ENCODE measurements at regions of chr13 and their contacts with region 1.

Region 1: GRCh38 chr13:28636674-28637317 is 22.1 kb upstream of the POMP start:
- DNase-seq: peak in 8 of 9 donors; percentile 25 to 66 (median 58)
- ATAC-seq: peak; percentile 78
- H3K4me3 ChIP-seq: no peak overlapping the region
- H3K4me3 Mint-ChIP-seq: peak overlapping the region; percentile 1 to 65 (median 34)
- H3K27ac ChIP-seq: no peak overlapping the region
- H3K27ac Mint-ChIP-seq: peak overlapping the region in 5 of 9 donors; percentile 3 to 49 (median 13)
- H3K4me1 ChIP-seq: peaks cover 0 to 7% of the 10 kb centered on the region in 2 donors
- H3K4me1 Mint-ChIP-seq: peaks cover 0 to 8% (median 7%) of the 10 kb centered on the region in 7 donors
- H3K27me3 ChIP-seq: no peaks in the 10 kb centered on the region
- H3K27me3 Mint-ChIP-seq: peaks cover 5 to 24% (median 17%) of the 10 kb centered on the region in 5 donors

Region 2: GRCh38 chr13:28239374-28239773 is 397.4 kb before region 1 on chr13:
- CTCF ChIA-PET with region 1: no interaction called
- POLR2A ChIA-PET with region 1: no interaction called
- intact Hi-C with region 1: no loop called
- DNase-seq: no peak
- ATAC-seq: no peak
- H3K4me3 ChIP-seq: no peak overlapping the region
- H3K4me3 Mint-ChIP-seq: no peak overlapping the region
- H3K27ac ChIP-seq: no peak overlapping the region
- H3K27ac Mint-ChIP-seq: peak overlapping the region in 4 of 9 donors; percentile 11 to 69 (median 18)
- H3K4me1 ChIP-seq: no peaks in the 10 kb centered on the region
- H3K4me1 Mint-ChIP-seq: peaks cover 0 to 34% (median 16%) of the 10 kb centered on the region in 7 donors
- H3K27me3 ChIP-seq: no peaks in the 10 kb centered on the region
- H3K27me3 Mint-ChIP-seq: no peaks in the 10 kb centered on the region

Region 3: GRCh38 chr13:28324181-28324789 is 312.5 kb before region 1 on chr13:
- CTCF ChIA-PET with region 1: interaction called, 4 read pairs
- POLR2A ChIA-PET with region 1: no interaction called
- intact Hi-C with region 1: loop called (anchors 1 kb)
- DNase-seq: peak; percentile 14 to 60 (median 51)
- ATAC-seq: peak; percentile 86
- H3K4me3 ChIP-seq: no peak overlapping the region
- H3K4me3 Mint-ChIP-seq: no peak overlapping the region
- H3K27ac ChIP-seq: no peak overlapping the region
- H3K27ac Mint-ChIP-seq: no peak overlapping the region
- H3K4me1 ChIP-seq: no peaks in the 10 kb centered on the region
- H3K4me1 Mint-ChIP-seq: peaks cover 0 to 5% (median 0%) of the 10 kb centered on the region in 7 donors
- H3K27me3 ChIP-seq: no peaks in the 10 kb centered on the region
- H3K27me3 Mint-ChIP-seq: peaks cover 0 to 6% (median 0%) of the 10 kb centered on the region in 5 donors

Region 4: DNA sequence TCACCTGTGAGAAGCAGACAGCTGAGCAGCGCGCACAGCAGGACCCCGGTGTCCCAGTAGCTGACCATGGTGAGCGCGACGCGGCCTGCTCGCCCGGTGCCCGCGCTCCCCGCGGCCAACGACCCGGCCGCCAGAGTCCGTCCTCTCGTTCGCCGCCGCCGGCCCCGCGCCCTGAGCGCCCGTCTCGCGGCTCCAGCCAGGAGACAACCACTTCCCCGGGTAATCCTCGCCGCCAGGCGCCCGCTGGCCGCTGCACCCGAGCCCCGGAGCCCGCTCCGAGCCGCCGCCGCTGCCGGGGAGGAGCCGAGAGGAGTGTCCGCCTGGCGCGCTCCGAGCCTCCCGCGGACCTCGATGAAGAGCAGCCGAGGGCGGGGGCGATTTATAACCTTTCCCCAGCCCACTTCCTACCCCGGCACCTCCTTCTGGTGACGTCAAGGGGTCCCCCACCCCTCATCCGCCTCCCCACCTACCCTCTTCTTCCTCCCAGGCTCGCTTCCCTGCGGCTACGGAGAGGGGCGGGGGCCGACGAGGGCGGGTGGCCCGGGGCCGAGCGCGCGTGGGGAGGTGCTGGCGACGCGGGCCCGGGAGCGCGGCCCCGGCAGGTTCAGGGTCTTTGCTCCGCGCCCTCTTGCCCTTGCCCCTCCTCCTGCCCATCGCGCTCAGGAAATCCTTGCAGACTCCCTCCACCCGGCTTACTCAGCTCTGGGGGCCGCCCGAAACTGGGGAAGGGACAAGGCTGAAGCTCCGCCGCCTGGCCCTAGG is 141.8 kb before region 1 on chr13 and contains the start of gene FLT1:
- CTCF ChIA-PET with region 1: interaction called, 3 read pairs
- POLR2A ChIA-PET with region 1: no interaction called
- intact Hi-C with region 1: loop called in 1 of 2 experiments (anchors 5 kb)
- DNase-seq: peak; percentile 27 to 65 (median 55)
- ATAC-seq: peak; percentile 39
- H3K4me3 ChIP-seq: peak within 1 kb of the TSS; percentile 44
- H3K4me3 Mint-ChIP-seq: peak within 1 kb of the TSS; percentile 23 to 85 (median 74)
- H3K27ac ChIP-seq: peak within 1 kb of the TSS; percentile 30
- H3K27ac Mint-ChIP-seq: peak within 1 kb of the TSS in 5 of 9 donors; percentile 28 to 76 (median 61)
- H3K4me1 ChIP-seq: peaks cover 0 to 13% of the 10 kb centered on the region in 2 donors
- H3K4me1 Mint-ChIP-seq: peaks cover 0 to 56% (median 37%) of the 10 kb centered on the region in 7 donors
- H3K27me3 ChIP-seq: no peaks in the 10 kb centered on the region
- H3K27me3 Mint-ChIP-seq: peaks cover 7 to 62% (median 52%) of the 10 kb centered on the region in 5 donors
- total RNA-seq, gene FLT1: 1.7 to 2.7 (median 2.3) TPM

Region 5: DNA sequence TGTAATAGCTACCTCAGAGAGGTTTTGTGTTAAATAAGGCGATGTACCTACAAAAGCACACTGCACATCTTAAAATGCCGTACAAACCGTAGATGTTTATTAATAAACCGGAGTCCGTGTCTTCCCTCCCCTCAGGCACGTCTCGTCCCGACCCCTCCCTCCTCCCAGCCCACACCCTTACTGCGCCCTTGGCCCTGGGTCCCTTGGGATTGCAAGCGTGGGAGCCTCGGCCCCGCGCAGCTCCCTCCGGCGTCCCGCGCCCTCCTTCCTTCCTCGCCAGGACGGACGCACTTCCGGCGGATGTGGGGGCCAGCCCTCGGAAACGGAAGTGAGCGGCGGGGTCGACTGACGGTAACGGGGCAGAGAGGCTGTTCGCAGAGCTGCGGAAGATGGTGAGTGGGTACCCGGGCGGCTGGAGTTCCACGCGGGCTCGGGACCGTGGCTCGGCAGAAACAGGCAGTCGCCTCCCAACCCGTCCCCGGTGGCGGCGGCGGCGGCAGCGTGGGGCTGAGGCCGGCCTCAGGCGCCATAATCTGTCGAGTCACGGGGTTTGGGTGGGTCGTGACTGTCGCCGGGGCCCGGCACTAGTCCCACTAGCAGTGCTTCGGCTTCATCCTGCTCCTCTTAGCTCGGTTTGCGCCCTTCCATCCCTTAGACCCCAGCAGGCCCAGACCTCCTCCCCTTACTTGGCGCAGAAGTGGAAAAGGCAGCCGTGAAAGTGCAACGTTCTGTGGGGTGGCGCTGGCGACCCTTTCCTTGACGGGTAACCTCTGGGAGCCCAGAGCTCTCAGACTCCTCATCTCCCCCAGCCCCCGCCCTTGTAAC is 22.2 kb after region 1 on chr13 and contains the start of gene POMP:
- CTCF ChIA-PET with region 1: no interaction called
- POLR2A ChIA-PET with region 1: no interaction called
- intact Hi-C with region 1: loop called in 1 of 2 experiments (anchors 1 kb)
- DNase-seq: peak; percentile 83 to 96 (median 93)
- ATAC-seq: peak; percentile 95
- H3K4me3 ChIP-seq: peak within 1 kb of the TSS; percentile 86
- H3K4me3 Mint-ChIP-seq: peak within 1 kb of the TSS; percentile 88 to 100 (median 98)
- H3K27ac ChIP-seq: peak within 1 kb of the TSS; percentile 96
- H3K27ac Mint-ChIP-seq: peak within 1 kb of the TSS; percentile 94 to 99 (median 99)
- H3K4me1 ChIP-seq: peaks cover 25 to 29% of the 10 kb centered on the region in 2 donors
- H3K4me1 Mint-ChIP-seq: peaks cover 38 to 84% (median 69%) of the 10 kb centered on the region in 7 donors
- H3K27me3 ChIP-seq: no peaks in the 10 kb centered on the region
- H3K27me3 Mint-ChIP-seq: no peaks in the 10 kb centered on the region
- total RNA-seq, gene POMP: 18.8 to 97.0 (median 21.2) TPM

Region 6: GRCh38 chr13:28942906-28943305 is 306.1 kb after region 1 on chr13:
- CTCF ChIA-PET with region 1: no interaction called
- POLR2A ChIA-PET with region 1: no interaction called
- intact Hi-C with region 1: no loop called
- DNase-seq: no peak
- ATAC-seq: no peak
- H3K4me3 ChIP-seq: no peak overlapping the region
- H3K4me3 Mint-ChIP-seq: no peak overlapping the region
- H3K27ac ChIP-seq: no peak overlapping the region
- H3K27ac Mint-ChIP-seq: no peak overlapping the region
- H3K4me1 ChIP-seq: no peaks in the 10 kb centered on the region
- H3K4me1 Mint-ChIP-seq: no peaks in the 10 kb centered on the region
- H3K27me3 ChIP-seq: peaks cover 0 to 4% of the 10 kb centered on the region in 2 donors
- H3K27me3 Mint-ChIP-seq: peaks cover 0 to 6% (median 4%) of the 10 kb centered on the region in 5 donors